Esophagus muscularis mucosa (tissue), 4 donors: ENCODE measurements at regions of chr2 and their contacts with region 1.

Region 1: DNA sequence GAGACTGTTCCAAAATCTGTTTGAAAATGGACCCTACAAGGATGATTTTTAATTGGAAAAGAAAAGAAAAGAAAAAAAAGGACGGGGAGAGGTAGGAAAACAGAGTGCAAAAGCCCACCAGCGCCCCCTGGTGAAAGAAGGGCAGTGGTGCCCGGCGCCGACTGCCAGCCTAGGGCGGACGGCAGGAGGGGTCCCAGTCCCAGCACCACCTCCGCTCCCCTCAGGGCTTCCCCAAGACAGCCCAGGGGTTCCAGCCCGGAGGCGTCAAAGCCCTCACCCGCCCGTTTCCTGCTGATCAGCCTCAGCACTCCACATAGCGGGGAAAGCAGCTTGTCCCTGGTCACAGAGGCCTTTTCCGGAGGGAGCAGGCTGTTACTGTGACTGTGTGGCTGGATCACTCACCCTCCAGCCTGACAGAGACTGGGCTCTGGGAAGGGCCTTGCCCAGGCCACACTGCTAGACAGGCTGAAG is 213.9 kb downstream of the TFCP2L1 start:
- DNase-seq: no peak
- H3K4me3 ChIP-seq: no peak overlapping the region
- H3K27ac ChIP-seq: no peak overlapping the region
- H3K4me1 ChIP-seq: peaks cover 7 to 27% (median 27%) of the 10 kb centered on the region in 4 donors
- H3K27me3 ChIP-seq: peaks cover 0 to 23% (median 0%) of the 10 kb centered on the region in 4 donors
- CTCF ChIP-seq: peak; percentile 86 to 96 (median 94)
- EP300 ChIP-seq: no peak
- POLR2A ChIP-seq: no peak

Region 2: DNA sequence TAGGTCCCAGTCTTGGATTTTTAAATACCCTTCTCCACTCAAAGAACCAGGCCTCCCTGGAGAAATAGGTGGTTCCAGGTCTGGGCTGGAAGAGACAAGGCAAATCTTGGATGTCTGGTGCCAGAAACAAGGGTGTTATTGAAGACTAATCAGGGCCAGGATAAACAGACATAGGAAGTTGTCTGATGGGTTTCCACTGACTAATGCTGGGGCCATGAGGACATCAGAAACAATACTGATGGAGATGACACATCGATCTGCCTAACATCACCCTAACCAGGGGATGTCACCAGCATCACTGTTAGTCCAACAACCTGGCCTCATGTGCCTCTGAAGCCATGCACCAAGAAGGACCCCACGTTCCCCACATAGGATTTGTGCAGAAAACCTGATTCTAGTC is 377.9 kb before region 1 on chr2:
- intact Hi-C with region 1: loop called (anchors 1 kb)
- DNase-seq: no peak
- H3K4me3 ChIP-seq: no peak overlapping the region
- H3K27ac ChIP-seq: no peak overlapping the region
- H3K4me1 ChIP-seq: peaks cover 0 to 10% (median 9%) of the 10 kb centered on the region in 4 donors
- H3K27me3 ChIP-seq: peaks cover 0 to 27% (median 0%) of the 10 kb centered on the region in 4 donors
- CTCF ChIP-seq: no peak
- EP300 ChIP-seq: no peak
- POLR2A ChIP-seq: no peak

Region 3: GRCh38 chr2:120958623-120959366 is 112.3 kb before region 1 on chr2:
- intact Hi-C with region 1: loop called (anchors 10 kb)
- DNase-seq: no peak
- H3K4me3 ChIP-seq: no peak overlapping the region
- H3K27ac ChIP-seq: peak overlapping the region in 3 of 4 donors; percentile 10 to 47 (median 45)
- H3K4me1 ChIP-seq: peaks cover 11 to 23% (median 18%) of the 10 kb centered on the region in 4 donors
- H3K27me3 ChIP-seq: no peaks in the 10 kb centered on the region
- CTCF ChIP-seq: peak in 1 of 3 experiments; percentile 22
- EP300 ChIP-seq: no peak
- POLR2A ChIP-seq: no peak